ENCODE measurements at regions of chr6 and their contacts with region 1.

Region 1: DNA sequence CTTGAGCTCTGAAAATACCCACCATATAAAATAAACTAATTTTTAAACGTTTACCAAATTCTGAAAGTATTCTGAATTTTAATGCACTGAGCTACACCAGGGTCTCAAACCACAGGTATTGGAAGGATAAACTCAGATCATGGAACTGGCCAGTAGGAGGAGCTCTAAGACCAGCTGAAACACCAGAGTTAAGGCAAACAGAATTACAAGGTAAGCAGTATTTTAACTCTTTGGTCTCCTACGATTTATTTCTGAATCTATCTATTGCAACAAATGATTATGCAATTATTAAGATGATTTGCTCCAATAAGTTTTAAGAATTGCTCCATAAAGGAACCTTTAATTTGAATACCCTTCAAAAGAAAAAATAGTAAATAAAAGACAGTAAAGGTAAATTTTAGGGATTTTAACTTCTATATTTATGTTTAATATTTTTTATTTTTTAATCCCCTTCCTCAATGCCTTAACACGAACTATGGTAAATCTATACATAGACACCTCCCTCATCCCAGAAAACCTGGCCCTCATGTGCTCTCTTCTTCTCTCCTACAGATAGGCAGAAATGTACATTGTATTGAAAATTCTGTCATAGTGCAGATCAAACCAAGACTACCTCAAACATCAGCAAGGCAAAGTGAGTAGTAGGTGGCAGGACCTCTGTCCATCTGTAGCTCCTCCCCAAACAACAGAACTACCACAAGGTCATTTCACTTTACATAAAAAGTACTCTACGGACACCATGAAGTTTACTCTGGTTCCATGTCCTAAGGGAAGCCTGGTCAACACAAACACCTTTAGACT is 58.4 kb downstream of the SMLR1 start:
- DNase-seq: peak; percentile 82
- ATAC-seq: peak; percentile 77
- H3K4me3 Mint-ChIP-seq: no peak overlapping the region
- H3K27ac Mint-ChIP-seq: no peak overlapping the region
- H3K4me1 Mint-ChIP-seq: no peaks in the 10 kb centered on the region
- H3K27me3 Mint-ChIP-seq: no peaks in the 10 kb centered on the region
- CTCF ChIP-seq: peak; percentile 96

Region 2: GRCh38 chr6:130872250-130873095 is 13.1 kb before region 1 on chr6:
- CTCF ChIA-PET with region 1: interaction called, 16 read pairs
- POLR2A ChIA-PET with region 1: no interaction called
- intact Hi-C with region 1: no loop called
- DNase-seq: peak; percentile 86
- ATAC-seq: peak; percentile 47
- H3K4me3 Mint-ChIP-seq: no peak overlapping the region
- H3K27ac Mint-ChIP-seq: no peak overlapping the region
- H3K4me1 Mint-ChIP-seq: no peaks in the 10 kb centered on the region
- H3K27me3 Mint-ChIP-seq: no peaks in the 10 kb centered on the region
- CTCF ChIP-seq: peak; percentile 93

Region 3: DNA sequence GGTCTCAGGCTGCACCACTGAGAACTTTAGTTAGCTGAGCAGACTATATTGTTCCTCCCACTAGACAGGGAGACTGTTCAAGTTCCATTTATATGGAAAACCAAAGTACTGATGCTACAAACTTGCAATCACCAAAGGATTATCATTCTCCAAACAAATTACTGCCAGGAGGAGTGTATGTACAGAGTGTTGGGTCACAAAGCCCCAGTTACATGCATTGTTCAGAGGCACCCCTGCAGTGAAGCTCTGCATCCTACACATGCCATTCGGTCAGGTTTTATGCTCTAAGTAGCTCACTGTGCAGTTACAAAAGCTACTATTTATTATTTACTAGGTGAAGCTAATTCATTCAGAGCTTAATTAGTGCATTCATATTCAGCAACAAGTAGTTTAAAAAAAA is 17.4 kb after region 1 on chr6:
- CTCF ChIA-PET with region 1: interaction called, 11 read pairs
- POLR2A ChIA-PET with region 1: no interaction called
- intact Hi-C with region 1: no loop called
- DNase-seq: no peak
- ATAC-seq: no peak
- H3K4me3 Mint-ChIP-seq: no peak overlapping the region
- H3K27ac Mint-ChIP-seq: no peak overlapping the region
- H3K4me1 Mint-ChIP-seq: no peaks in the 10 kb centered on the region
- H3K27me3 Mint-ChIP-seq: no peaks in the 10 kb centered on the region
- CTCF ChIP-seq: no peak

Region 4: DNA sequence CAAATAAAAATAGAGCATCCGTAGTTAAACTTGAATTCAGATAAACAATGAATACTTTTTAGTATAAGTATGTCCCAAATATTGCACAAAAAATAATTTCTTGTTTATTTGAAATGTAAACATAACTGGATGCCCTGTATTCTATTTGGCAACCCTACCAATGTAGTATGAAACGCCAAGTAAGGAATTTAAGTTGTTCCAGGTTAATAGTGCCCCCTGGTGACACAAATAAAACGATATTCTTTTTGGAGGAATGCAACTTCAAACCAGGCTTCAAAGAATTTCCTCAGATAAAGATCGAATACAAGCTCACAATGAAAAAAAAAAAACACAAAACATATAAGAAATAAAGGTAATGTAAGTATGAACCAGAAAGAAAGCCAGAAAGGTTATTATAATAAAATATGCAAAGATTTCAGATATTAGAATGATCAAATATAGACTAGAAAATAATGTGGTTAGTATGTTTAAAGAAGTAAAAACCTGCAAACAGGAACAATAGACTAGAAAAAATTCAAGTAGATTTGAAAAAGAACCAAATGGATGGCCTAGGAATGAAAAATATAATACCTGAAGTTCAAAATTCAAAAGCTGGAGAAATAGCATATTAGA is 231.3 kb after region 1 on chr6:
- CTCF ChIA-PET with region 1: interaction called, 117 read pairs
- POLR2A ChIA-PET with region 1: no interaction called
- intact Hi-C with region 1: loop called (anchors 1 kb)
- DNase-seq: no peak
- ATAC-seq: no peak
- H3K4me3 Mint-ChIP-seq: no peak overlapping the region
- H3K27ac Mint-ChIP-seq: no peak overlapping the region
- H3K4me1 Mint-ChIP-seq: no peaks in the 10 kb centered on the region
- H3K27me3 Mint-ChIP-seq: peaks cover 1% of the 10 kb centered on the region
- CTCF ChIP-seq: peak; percentile 72

Region 5: DNA sequence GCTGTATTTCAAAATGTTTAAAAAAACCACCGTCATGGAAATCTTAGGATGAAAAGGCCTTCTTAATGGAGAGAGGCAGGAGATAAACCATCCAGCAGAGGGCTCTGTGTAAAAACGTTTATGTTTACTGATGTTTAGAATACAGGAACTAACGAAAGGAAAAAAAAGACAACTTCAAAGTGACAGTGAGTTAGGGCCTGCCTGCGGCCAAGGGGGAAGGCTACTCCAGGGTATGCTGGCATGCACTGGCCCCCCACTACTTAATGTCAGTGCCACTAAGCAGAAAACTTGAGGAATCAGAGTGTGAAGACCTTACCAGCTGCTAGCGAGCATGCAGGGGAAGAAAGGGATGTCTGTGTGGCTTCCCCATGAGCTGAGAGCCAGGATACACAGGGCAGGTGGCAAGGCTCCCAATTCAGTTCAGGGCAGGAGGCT is 297.4 kb after region 1 on chr6:
- CTCF ChIA-PET with region 1: interaction called, 12 read pairs
- POLR2A ChIA-PET with region 1: no interaction called
- intact Hi-C with region 1: no loop called
- DNase-seq: peak; percentile 33
- ATAC-seq: peak; percentile 66
- H3K4me3 Mint-ChIP-seq: no peak overlapping the region
- H3K27ac Mint-ChIP-seq: peak overlapping the region; percentile 55
- H3K4me1 Mint-ChIP-seq: peaks cover 9% of the 10 kb centered on the region
- H3K27me3 Mint-ChIP-seq: no peaks in the 10 kb centered on the region
- CTCF ChIP-seq: peak; percentile 58

Measured in activated CD8-positive, alpha-beta T cell treated with anti-CD3 and anti-CD28 coated beads for 36 hours (primary cell).